HEK293 (cell line): ENCODE measurements at regions of chr2 and their contacts with region 1.

Region 1: DNA sequence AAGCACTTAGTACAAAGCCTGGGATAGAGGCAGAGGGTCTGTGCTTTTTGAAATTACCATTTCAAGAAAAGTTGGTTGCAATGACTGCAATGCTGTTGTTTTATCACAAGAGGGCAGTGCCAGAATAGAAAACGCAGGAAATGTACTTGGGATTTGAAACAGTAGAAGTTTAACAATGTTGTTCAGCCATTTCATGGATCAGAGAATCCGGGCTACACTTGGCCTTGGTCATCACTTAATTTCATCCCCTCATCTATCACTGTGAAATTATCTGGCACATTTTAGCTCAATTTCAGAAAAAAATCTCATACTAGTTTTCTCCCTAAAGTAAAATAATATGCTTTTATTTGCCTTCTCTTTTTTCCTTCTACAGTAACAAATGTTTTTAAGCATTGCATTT is 70.8 kb downstream of the RAPGEF4 start:
- H3K4me3 ChIP-seq: no peak overlapping the region
- H3K27ac ChIP-seq: no peak overlapping the region
- H3K4me1 ChIP-seq: 0 out of 2 replicates have a peak, but pooled peaks cover 3% of the 10 kb centered on the region
- CTCF ChIP-seq: peak; percentile 71

Region 2: DNA sequence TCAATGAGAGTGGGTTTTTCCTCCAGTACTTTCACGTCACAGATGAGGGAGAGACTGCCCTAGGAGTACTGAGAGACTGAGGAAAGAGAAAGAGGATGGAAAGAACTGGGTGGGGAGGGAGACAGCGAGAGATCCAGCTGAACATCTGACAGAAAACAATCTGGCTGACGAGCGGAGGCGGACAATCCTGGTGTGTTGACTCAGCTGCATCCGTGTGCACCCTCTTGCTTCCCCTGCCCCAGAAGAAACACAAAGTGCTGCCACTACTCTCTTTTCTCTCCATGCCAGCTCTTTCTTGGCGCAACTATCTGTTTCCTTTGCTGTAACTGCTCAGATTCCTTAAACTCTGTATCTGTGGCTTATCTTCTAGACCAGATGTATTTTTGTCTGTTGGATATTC is 63.4 kb before region 1 on chr2:
- CTCF ChIA-PET with region 1: no interaction called
- POLR2A ChIA-PET with region 1: no interaction called
- H3K4me3 ChIP-seq: no peak overlapping the region
- H3K27ac ChIP-seq: no peak overlapping the region
- H3K4me1 ChIP-seq: no peaks in the 10 kb centered on the region
- CTCF ChIP-seq: no peak

Region 3: GRCh38 chr2:172921532-172922236 is 115.2 kb after region 1 on chr2:
- CTCF ChIA-PET with region 1: interaction called, 154 read pairs
- POLR2A ChIA-PET with region 1: no interaction called
- H3K4me3 ChIP-seq: no peak overlapping the region
- H3K27ac ChIP-seq: no peak overlapping the region
- H3K4me1 ChIP-seq: peaks cover 6% of the 10 kb centered on the region
- CTCF ChIP-seq: no peak